ENCODE measurements at regions of chr9 and their contacts with region 1.

Region 1: DNA sequence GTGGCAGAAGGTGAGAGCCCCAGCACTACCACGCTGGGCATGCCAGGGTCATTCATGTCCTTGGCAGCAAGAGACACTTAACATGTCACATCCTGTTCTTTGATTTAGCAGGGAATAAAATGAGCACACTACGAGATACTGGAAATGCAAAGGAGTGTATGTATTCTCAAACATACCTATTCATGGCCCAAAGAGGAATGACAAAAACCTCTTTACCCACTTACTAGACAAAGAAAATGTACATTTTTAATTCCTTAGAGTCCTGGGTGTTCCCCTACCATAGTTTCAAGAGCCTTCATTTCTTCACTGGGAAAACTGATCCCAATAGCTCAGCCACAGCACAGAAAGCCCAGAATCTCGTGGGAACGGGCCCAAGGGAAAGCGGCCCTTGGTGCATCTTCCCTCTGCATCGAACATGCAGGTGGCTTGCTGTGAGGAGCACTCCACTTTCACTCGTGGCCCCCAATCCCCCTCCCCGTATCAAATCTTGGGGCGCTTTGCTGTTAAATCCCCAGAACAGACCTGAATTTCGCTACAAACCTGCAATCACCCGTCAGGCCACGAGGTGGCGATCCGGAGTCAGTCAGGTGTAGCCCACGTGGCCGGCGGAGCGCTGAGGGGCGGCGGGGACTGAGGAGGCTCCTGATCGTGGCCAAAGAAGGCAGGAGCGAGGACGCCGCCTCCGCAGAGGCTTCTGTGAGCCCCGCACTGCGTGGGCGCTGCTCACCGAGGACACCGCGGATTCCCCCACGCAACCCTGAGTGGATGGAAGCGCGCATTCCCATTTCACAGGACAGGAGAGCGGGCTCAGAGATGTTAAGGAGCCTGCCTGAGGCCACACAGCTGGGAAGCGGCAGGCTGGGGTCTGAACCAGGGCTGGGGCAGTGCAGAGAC is 91.4 kb downstream of the LMX1B start:
- DNase-seq: peak; percentile 73
- H3K4me3 Mint-ChIP-seq: peak overlapping the region; percentile 60
- H3K27ac Mint-ChIP-seq: no peak overlapping the region
- H3K4me1 Mint-ChIP-seq: peaks cover 12% of the 10 kb centered on the region
- H3K27me3 Mint-ChIP-seq: no peaks in the 10 kb centered on the region
- CTCF ChIP-seq: peak; percentile 88

Region 2: DNA sequence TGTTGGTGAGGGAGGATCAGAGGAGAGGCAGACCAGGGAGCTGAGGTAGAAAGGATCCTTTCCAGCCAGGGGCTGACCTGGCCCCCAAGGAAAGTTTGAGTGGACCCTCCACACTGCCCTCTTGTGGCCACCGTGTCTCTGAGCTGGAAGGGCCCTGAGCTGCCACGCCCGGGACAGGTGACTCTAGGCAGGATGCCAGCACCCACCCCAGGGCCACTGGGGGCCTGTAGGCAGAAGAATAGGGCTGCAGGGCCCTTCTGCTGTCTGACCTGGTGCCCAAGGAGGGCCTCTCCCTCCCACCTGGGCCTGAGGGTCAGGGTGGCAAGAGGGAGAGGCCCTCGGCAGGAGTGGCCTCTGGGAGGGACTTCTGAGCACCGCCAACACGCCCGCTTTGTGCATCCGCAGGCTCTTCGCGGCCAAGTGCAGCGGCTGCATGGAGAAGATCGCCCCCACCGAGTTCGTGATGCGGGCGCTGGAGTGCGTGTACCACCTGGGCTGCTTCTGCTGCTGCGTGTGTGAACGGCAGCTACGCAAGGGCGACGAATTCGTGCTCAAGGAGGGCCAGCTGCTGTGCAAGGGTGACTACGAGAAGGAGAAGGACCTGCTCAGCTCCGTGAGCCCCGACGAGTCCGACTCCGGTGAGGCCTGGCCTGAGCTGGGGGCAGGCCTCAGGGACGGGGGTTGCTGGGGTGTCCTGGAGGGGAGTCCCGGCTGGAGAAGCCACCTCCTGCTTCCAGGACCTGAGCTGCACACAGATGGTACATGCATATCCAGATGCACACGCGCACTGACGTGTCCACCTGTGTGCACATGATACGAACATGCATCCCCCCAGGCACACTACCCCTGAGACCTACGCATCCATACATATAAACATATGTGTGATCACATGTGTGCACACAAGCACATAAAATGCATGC is 14.4 kb before region 1 on chr9:
- CTCF ChIA-PET with region 1: interaction called, 33 read pairs
- POLR2A ChIA-PET with region 1: no interaction called
- intact Hi-C with region 1: no loop called
- DNase-seq: peak; percentile 54
- H3K4me3 Mint-ChIP-seq: no peak overlapping the region
- H3K27ac Mint-ChIP-seq: no peak overlapping the region
- H3K4me1 Mint-ChIP-seq: no peaks in the 10 kb centered on the region
- H3K27me3 Mint-ChIP-seq: no peaks in the 10 kb centered on the region
- CTCF ChIP-seq: peak; percentile 77

Region 3: GRCh38 chr9:126743041-126743440 is 37.9 kb after region 1 on chr9:
- CTCF ChIA-PET with region 1: interaction called, 24 read pairs
- POLR2A ChIA-PET with region 1: no interaction called
- intact Hi-C with region 1: no loop called
- DNase-seq: no peak
- H3K4me3 Mint-ChIP-seq: no peak overlapping the region
- H3K27ac Mint-ChIP-seq: no peak overlapping the region
- H3K4me1 Mint-ChIP-seq: peaks cover 4% of the 10 kb centered on the region
- H3K27me3 Mint-ChIP-seq: peaks cover 61% of the 10 kb centered on the region
- CTCF ChIP-seq: no peak

Region 4: GRCh38 chr9:126761274-126761673 is 56.2 kb after region 1 on chr9:
- CTCF ChIA-PET with region 1: interaction called, 16 read pairs
- POLR2A ChIA-PET with region 1: interaction called, 3 read pairs
- intact Hi-C with region 1: no loop called
- DNase-seq: no peak
- H3K4me3 Mint-ChIP-seq: no peak overlapping the region
- H3K27ac Mint-ChIP-seq: no peak overlapping the region
- H3K4me1 Mint-ChIP-seq: no peaks in the 10 kb centered on the region
- H3K27me3 Mint-ChIP-seq: no peaks in the 10 kb centered on the region
- CTCF ChIP-seq: no peak

Region 5: GRCh38 chr9:126781186-126782052 is 76.3 kb after region 1 on chr9:
- CTCF ChIA-PET with region 1: interaction called, 358 read pairs
- POLR2A ChIA-PET with region 1: interaction called, 85 read pairs
- intact Hi-C with region 1: loop called (anchors 1 kb)
- DNase-seq: peak; percentile 79
- H3K4me3 Mint-ChIP-seq: no peak overlapping the region
- H3K27ac Mint-ChIP-seq: no peak overlapping the region
- H3K4me1 Mint-ChIP-seq: peaks cover 5% of the 10 kb centered on the region
- H3K27me3 Mint-ChIP-seq: no peaks in the 10 kb centered on the region
- CTCF ChIP-seq: peak; percentile 97